ENCODE measurements at regions of chr5 and their contacts with region 1.

Region 1: GRCh38 chr5:80246001-80246758 is 9.7 kb downstream of the SERINC5 start:
- DNase-seq: no peak
- H3K4me3 Mint-ChIP-seq: peak overlapping the region; percentile 55
- H3K27ac Mint-ChIP-seq: peak overlapping the region; percentile 68
- H3K4me1 Mint-ChIP-seq: peaks cover 41% of the 10 kb centered on the region
- H3K27me3 Mint-ChIP-seq: no peaks in the 10 kb centered on the region

Region 2: GRCh38 chr5:78377056-78377717 is 1869.0 kb before region 1 on chr5:
- intact Hi-C with region 1: no loop called
- DNase-seq: no peak
- H3K4me3 Mint-ChIP-seq: no peak overlapping the region
- H3K27ac Mint-ChIP-seq: no peak overlapping the region
- H3K4me1 Mint-ChIP-seq: peaks cover 3% of the 10 kb centered on the region
- H3K27me3 Mint-ChIP-seq: no peaks in the 10 kb centered on the region

Region 3: DNA sequence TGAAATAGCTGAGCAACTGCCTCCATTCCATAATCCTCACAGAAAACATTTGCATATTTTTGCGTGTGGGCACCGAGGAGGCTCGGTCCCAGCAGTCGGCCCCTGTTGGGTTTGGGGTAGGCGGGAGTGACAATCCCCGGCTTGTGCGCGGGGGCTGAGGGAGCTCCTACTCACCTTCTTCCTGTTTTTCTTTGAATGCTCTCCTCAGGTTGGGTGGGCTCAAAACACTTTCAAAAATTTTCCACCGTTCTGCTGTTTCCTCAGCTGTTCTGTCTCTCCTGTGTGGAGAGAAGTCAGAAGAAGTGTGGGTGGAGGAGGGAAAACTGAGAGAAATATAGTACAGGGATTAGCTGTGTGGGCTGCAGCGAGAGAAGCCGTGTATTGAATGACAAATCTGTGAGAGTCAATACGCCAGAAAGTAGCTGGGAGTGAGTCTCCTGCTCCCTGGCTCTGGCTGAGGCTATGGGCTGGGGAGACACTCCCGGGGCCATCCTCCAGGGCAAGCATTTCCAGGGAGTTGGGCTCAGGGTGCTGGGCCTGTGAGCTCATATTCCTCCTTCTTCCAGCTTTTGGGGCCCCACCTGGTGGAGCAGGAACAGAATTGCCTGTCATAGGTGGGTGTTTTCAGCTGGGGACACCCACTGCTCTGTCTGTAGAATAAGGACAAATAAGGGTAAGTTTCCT is 471.9 kb before region 1 on chr5:
- intact Hi-C with region 1: no loop called
- DNase-seq: no peak
- H3K4me3 Mint-ChIP-seq: no peak overlapping the region
- H3K27ac Mint-ChIP-seq: no peak overlapping the region
- H3K4me1 Mint-ChIP-seq: no peaks in the 10 kb centered on the region
- H3K27me3 Mint-ChIP-seq: peaks cover 1% of the 10 kb centered on the region

Region 4: DNA sequence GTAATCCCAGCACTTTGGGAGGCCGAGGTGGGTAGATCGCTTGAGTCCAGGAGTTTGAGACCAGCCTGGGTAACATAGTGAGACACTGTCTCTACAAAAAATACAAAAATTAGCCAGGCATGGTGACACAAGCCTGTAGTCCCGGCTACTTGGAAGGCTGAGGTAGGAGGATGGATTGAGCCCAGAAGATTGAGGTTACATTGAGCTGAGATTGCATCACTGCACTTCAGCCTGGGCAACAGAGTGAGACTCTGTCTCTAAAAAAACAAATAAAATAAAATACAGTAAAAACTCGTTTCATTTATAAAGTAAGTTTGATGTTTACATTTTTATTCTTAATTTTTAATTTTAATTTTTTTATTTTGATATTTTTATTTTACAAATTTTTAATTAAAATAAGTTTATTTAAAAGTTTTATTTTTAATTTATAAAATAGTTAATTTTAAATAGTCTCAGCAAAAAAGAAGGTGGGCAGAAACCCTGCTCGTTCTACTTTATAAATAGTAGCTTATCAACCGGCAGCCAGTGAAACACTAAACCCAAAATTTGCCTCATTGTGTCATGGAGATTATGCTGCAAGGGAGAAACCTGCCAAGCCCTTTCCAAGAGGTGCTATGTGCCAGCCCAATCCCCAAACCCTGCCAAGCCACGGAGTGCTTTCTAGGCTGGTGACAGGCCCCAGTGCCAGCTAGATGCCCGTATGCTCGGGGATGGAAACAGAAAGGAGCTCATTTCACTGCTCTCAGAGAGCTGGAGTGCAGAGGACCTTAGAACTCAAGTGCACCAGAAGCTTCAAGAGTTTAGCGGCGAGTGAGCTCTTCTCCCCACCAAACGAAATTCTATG is 29.2 kb before region 1 on chr5:
- intact Hi-C with region 1: loop called (anchors 2 kb)
- DNase-seq: no peak
- H3K4me3 Mint-ChIP-seq: no peak overlapping the region
- H3K27ac Mint-ChIP-seq: peak overlapping the region; percentile 34
- H3K4me1 Mint-ChIP-seq: peaks cover 52% of the 10 kb centered on the region
- H3K27me3 Mint-ChIP-seq: no peaks in the 10 kb centered on the region

Region 5: GRCh38 chr5:80437326-80437725 is 191.1 kb after region 1 on chr5:
- intact Hi-C with region 1: no loop called
- DNase-seq: no peak
- H3K4me3 Mint-ChIP-seq: no peak overlapping the region
- H3K27ac Mint-ChIP-seq: no peak overlapping the region
- H3K4me1 Mint-ChIP-seq: no peaks in the 10 kb centered on the region
- H3K27me3 Mint-ChIP-seq: no peaks in the 10 kb centered on the region

Measured in activated CD4-positive, alpha-beta T cell treated with anti-CD3 and anti-CD28 coated beads, Interleukin-2, amount 10 ng/mL, durations not matched to agents 24 days and 14 days (primary cell).